ENCODE measurements at regions of chr5 and their contacts with region 1.

Region 1: GRCh38 chr5:32406650-32407049 is 37.9 kb downstream of the ZFR start:
- DNase-seq: no peak
- ATAC-seq: no peak
- H3K4me3 ChIP-seq: no peak overlapping the region
- H3K27ac ChIP-seq: no peak overlapping the region
- H3K4me1 ChIP-seq: no peaks in the 10 kb centered on the region
- H3K27me3 ChIP-seq: no peaks in the 10 kb centered on the region
- CTCF ChIP-seq: no peak
- EP300 ChIP-seq: no peak
- POLR2A ChIP-seq: no peak
- RAD21 ChIP-seq: no peak

Region 2: GRCh38 chr5:32115985-32116384 is 290.7 kb before region 1 on chr5:
- CTCF ChIA-PET with region 1: no interaction called
- POLR2A ChIA-PET with region 1: no interaction called
- in situ Hi-C with region 1: no loop called
- intact Hi-C with region 1: no loop called
- DNase-seq: peak in 1 of 4 experiments; percentile 13
- ATAC-seq: peak; percentile 67
- H3K4me3 ChIP-seq: no peak overlapping the region
- H3K27ac ChIP-seq: no peak overlapping the region
- H3K4me1 ChIP-seq: no peaks in the 10 kb centered on the region; a peak in 1 of 5 replicates
- H3K27me3 ChIP-seq: no peaks in the 10 kb centered on the region
- CTCF ChIP-seq: no peak
- EP300 ChIP-seq: no peak
- POLR2A ChIP-seq: no peak
- RAD21 ChIP-seq: no peak

Region 3: DNA sequence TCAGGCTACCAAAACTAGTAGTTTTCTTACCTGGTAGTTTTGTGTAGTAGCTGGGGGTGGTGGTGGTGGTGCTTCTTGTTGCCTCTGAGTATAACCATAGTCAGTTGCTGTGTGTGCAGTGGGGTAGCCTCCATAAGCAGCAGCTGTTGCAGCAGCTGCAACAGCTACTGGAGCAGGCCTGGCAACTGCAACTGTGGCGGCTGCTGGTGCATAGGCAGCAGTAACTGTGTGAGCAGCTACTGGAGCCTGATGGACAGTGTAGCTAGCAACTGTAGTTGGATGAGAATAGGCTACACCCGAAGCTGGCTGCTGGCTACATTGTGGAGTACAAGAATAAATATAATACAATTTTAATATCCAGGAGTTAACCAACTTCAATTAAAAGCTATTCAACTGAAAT is 13.1 kb after region 1 on chr5:
- CTCF ChIA-PET with region 1: no interaction called
- POLR2A ChIA-PET with region 1: interaction called, 23 read pairs
- in situ Hi-C with region 1: no loop called
- intact Hi-C with region 1: no loop called
- DNase-seq: no peak
- ATAC-seq: peak; percentile 24
- H3K4me3 ChIP-seq: no peak overlapping the region
- H3K27ac ChIP-seq: no peak overlapping the region
- H3K4me1 ChIP-seq: peaks cover 0 to 4% of the 10 kb centered on the region in 2 experiments; a peak in 1 of 5 replicates
- H3K27me3 ChIP-seq: no peaks in the 10 kb centered on the region
- CTCF ChIP-seq: no peak
- EP300 ChIP-seq: no peak
- POLR2A ChIP-seq: no peak
- RAD21 ChIP-seq: no peak

Measured in K562 (cell line).